GM18951 (cell line): ENCODE measurements at regions of chr10 and their contacts with region 1.

Region 1: GRCh38 chr10:36899651-36900050 is 225.7 kb upstream of the ANKRD30A start:
- POLR2A ChIP-seq: no peak

Region 2: GRCh38 chr10:36634916-36635315 is 264.7 kb before region 1 on chr10:
- in situ Hi-C with region 1: no loop called
- POLR2A ChIP-seq: no peak

Region 3: GRCh38 chr10:37710831-37711616 is 811.4 kb after region 1 on chr10:
- in situ Hi-C with region 1: loop called (anchors 25 kb)
- POLR2A ChIP-seq: no peak